Mammary epithelial cell (primary cell): ENCODE measurements at regions of chr6 and their contacts with region 1.

Region 1: GRCh38 chr6:132820629-132821381 is 6.4 kb downstream of the RPS12 start:
- DNase-seq: peak; percentile 20
- H3K4me3 ChIP-seq: no peak overlapping the region
- H3K27ac ChIP-seq: no peak overlapping the region
- H3K4me1 ChIP-seq: peaks cover 17% of the 10 kb centered on the region
- H3K27me3 ChIP-seq: no peaks in the 10 kb centered on the region
- CTCF ChIP-seq: no peak

Region 2: GRCh38 chr6:132798869-132799538 is 21.8 kb before region 1 on chr6:
- CTCF ChIA-PET with region 1: interaction called, 19 read pairs
- dilution Hi-C with region 1: no loop called
- in situ Hi-C with region 1: no loop called
- intact Hi-C with region 1: no loop called
- DNase-seq: peak; percentile 72
- H3K4me3 ChIP-seq: peak overlapping the region; percentile 77 to 92 (median 91)
- H3K27ac ChIP-seq: no peak overlapping the region
- H3K4me1 ChIP-seq: no peaks in the 10 kb centered on the region
- H3K27me3 ChIP-seq: no peaks in the 10 kb centered on the region
- CTCF ChIP-seq: peak; percentile 89 to 95

Region 3: GRCh38 chr6:132863895-132864294 is 43.1 kb after region 1 on chr6:
- CTCF ChIA-PET with region 1: no interaction called
- dilution Hi-C with region 1: loop called (anchors 5 kb)
- in situ Hi-C with region 1: no loop called
- intact Hi-C with region 1: no loop called
- DNase-seq: no peak
- H3K4me3 ChIP-seq: no peak overlapping the region
- H3K27ac ChIP-seq: no peak overlapping the region
- H3K4me1 ChIP-seq: no peaks in the 10 kb centered on the region
- H3K27me3 ChIP-seq: no peaks in the 10 kb centered on the region
- CTCF ChIP-seq: no peak

Region 4: GRCh38 chr6:132893788-132894428 is 73.1 kb after region 1 on chr6:
- CTCF ChIA-PET with region 1: no interaction called
- dilution Hi-C with region 1: no loop called
- in situ Hi-C with region 1: no loop called
- intact Hi-C with region 1: no loop called
- DNase-seq: no peak
- H3K4me3 ChIP-seq: no peak overlapping the region
- H3K27ac ChIP-seq: no peak overlapping the region
- H3K4me1 ChIP-seq: no peaks in the 10 kb centered on the region
- H3K27me3 ChIP-seq: no peaks in the 10 kb centered on the region
- CTCF ChIP-seq: no peak

Region 5: DNA sequence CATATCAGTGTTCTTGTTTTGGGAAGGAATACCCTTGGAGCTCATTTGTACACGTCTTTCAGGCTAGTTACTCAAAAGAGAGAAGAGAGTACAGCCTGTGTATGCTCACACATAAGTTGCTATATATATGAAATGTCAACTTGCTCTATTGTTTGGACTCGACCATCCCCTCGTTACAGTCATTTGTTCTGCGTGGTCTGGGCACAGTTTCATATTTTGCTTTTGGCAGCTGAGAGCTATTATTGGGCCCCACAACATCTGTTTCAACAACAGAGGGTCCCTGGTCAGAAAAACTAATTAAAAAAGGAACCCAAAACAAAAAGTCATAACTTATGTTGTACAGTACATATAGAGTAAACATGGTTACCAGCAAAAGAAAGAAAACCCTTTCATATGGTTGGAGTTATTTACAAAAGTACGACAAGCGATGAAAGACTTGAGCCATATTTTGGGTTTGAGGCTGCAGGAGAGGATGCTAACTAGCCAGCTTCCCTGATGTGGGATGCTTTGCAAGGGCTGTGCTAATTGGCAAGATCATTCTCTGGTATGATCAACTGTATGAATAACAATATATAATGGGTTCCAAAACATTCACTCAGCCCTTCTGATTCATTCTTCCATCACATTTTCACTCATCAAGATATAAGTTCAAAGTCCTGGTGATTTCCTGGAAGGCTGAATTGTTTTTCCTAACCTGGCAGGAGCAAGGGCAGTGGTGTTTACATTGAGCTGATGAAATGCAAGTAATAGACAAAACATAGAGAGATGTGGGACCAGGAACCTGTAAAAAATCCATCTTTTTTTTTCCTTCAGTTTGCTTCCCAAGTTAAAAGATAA is 131.4 kb after region 1 on chr6:
- CTCF ChIA-PET with region 1: no interaction called
- dilution Hi-C with region 1: no loop called
- in situ Hi-C with region 1: no loop called
- intact Hi-C with region 1: no loop called
- DNase-seq: no peak
- H3K4me3 ChIP-seq: no peak overlapping the region
- H3K27ac ChIP-seq: no peak overlapping the region
- H3K4me1 ChIP-seq: no peaks in the 10 kb centered on the region
- H3K27me3 ChIP-seq: no peaks in the 10 kb centered on the region
- CTCF ChIP-seq: no peak

Region 6: GRCh38 chr6:133198725-133199124 is 377.9 kb after region 1 on chr6:
- CTCF ChIA-PET with region 1: no interaction called
- dilution Hi-C with region 1: no loop called
- in situ Hi-C with region 1: no loop called
- intact Hi-C with region 1: loop called (anchors 10 kb)
- DNase-seq: peak; percentile 88
- H3K4me3 ChIP-seq: no peak overlapping the region
- H3K27ac ChIP-seq: no peak overlapping the region
- H3K4me1 ChIP-seq: peaks cover 4% of the 10 kb centered on the region
- H3K27me3 ChIP-seq: peaks cover 4% of the 10 kb centered on the region
- CTCF ChIP-seq: no peak